Activated CD4-positive, alpha-beta memory T cell treated with anti-CD3 and anti-CD28 coated beads for 36 hours (primary cell): ENCODE measurements at regions of chr6 and their contacts with region 1.

Region 1: DNA sequence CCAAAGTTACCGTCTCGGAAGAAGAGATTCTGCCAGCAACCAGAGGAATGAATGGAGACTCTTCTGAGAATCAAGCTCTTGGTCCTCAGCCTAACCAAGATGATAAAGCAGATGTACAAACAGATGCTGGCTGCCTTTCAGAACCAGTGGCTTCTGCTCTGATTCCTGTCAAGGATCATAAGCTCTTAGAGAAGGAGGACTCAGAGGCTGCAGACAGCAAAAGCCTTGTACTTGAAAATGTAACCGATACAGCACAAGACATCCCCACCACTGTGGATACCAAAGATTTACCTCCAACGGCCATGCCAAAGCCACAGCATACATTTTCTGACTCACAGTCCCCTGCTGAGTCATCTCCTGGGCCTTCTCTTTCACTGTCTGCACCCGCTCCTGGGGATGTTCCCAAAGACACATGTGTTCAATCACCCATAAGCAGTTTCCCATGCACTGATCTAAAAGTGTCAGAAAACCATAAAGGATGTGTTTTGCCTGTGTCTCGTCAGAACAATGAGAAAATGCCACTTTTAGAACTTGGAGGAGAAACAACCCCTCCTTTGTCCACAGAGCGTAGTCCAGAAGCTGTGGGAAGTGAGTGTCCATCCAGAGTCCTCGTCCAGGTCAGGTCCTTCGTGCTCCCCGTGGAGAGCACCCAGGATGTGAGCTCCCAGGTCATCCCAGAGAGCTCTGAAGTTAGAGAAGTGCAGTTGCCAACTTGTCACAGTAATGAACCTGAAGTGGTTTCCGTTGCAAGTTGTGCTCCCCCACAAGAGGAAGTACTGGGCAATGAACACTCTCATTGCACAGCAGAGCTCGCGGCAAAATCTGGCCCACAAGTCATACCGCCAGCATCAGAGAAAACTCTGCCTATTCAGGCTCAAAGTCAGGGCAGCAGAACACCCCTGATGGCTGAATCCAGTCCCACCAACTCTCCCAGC is 109.6 kb downstream of the RTN4IP1 start:
- DNase-seq: peak; percentile 92
- H3K4me3 Mint-ChIP-seq: peak overlapping the region; percentile 76
- H3K27ac Mint-ChIP-seq: peak overlapping the region; percentile 99
- H3K4me1 Mint-ChIP-seq: peaks cover 67% of the 10 kb centered on the region
- H3K27me3 Mint-ChIP-seq: no peaks in the 10 kb centered on the region

Region 2: DNA sequence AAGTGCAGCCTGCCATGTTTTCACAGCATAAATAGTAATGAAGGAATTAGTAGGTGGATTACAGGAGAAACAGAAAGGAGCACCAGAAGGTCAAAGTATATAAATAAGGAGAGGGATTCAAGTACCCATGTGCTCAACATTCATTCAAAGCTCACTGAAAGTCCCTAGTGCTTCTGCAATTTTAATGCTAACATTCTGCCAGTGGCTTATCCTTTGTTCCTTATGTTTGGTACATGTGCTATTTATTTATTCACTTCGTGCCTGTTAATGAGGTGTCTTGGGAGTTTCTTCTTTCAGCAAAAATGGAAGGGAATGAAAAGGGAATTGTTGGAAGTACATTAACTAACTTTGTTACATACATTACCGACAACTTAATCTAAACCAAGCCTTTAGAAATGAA is 53.5 kb before region 1 on chr6:
- CTCF ChIA-PET with region 1: no interaction called
- POLR2A ChIA-PET with region 1: no interaction called
- intact Hi-C with region 1: no loop called
- DNase-seq: no peak
- H3K4me3 Mint-ChIP-seq: no peak overlapping the region
- H3K27ac Mint-ChIP-seq: no peak overlapping the region
- H3K4me1 Mint-ChIP-seq: no peaks in the 10 kb centered on the region
- H3K27me3 Mint-ChIP-seq: peaks cover 14% of the 10 kb centered on the region

Region 3: GRCh38 chr6:106477790-106478189 is 41.9 kb before region 1 on chr6:
- CTCF ChIA-PET with region 1: interaction called, 3 read pairs
- POLR2A ChIA-PET with region 1: interaction called, 3 read pairs
- intact Hi-C with region 1: loop called (anchors 1 kb)
- DNase-seq: no peak
- H3K4me3 Mint-ChIP-seq: no peak overlapping the region
- H3K27ac Mint-ChIP-seq: no peak overlapping the region
- H3K4me1 Mint-ChIP-seq: peaks cover 9% of the 10 kb centered on the region
- H3K27me3 Mint-ChIP-seq: no peaks in the 10 kb centered on the region

Region 4: DNA sequence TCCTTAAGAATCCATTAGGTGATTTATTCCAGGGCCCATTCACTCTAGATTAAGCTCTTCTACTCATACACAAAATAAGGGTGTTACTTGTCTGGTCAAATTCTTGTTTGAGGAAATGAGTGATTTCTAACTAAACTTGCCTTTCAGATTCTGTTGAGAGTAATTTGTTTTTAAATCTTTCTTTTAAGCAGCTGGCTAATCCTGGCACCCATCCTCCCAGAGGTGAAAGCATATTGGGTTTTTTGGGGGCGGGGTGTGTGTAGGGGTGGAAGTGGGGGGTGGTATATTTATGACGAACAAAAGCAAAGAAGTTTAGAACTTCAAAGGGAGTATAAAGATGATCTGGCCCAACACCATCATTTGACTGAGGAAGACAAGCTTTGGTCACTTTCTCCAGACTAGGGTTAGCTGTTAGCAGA is 14.8 kb after region 1 on chr6:
- CTCF ChIA-PET with region 1: interaction called, 29 read pairs
- POLR2A ChIA-PET with region 1: interaction called, 47 read pairs
- intact Hi-C with region 1: loop called (anchors 1 kb)
- DNase-seq: peak; percentile 84
- H3K4me3 Mint-ChIP-seq: peak overlapping the region; percentile 17
- H3K27ac Mint-ChIP-seq: peak overlapping the region; percentile 92
- H3K4me1 Mint-ChIP-seq: peaks cover 85% of the 10 kb centered on the region
- H3K27me3 Mint-ChIP-seq: no peaks in the 10 kb centered on the region

Region 5: GRCh38 chr6:106546691-106547414 is 27.1 kb after region 1 on chr6:
- CTCF ChIA-PET with region 1: interaction called, 37 read pairs
- POLR2A ChIA-PET with region 1: interaction called, 24 read pairs
- intact Hi-C with region 1: loop called (anchors 1 kb)
- DNase-seq: no peak
- H3K4me3 Mint-ChIP-seq: no peak overlapping the region
- H3K27ac Mint-ChIP-seq: peak overlapping the region; percentile 87
- H3K4me1 Mint-ChIP-seq: peaks cover 47% of the 10 kb centered on the region
- H3K27me3 Mint-ChIP-seq: no peaks in the 10 kb centered on the region